OCI-LY7 (cell line): ENCODE measurements at regions of chr2 and their contacts with region 1.

Region 1: DNA sequence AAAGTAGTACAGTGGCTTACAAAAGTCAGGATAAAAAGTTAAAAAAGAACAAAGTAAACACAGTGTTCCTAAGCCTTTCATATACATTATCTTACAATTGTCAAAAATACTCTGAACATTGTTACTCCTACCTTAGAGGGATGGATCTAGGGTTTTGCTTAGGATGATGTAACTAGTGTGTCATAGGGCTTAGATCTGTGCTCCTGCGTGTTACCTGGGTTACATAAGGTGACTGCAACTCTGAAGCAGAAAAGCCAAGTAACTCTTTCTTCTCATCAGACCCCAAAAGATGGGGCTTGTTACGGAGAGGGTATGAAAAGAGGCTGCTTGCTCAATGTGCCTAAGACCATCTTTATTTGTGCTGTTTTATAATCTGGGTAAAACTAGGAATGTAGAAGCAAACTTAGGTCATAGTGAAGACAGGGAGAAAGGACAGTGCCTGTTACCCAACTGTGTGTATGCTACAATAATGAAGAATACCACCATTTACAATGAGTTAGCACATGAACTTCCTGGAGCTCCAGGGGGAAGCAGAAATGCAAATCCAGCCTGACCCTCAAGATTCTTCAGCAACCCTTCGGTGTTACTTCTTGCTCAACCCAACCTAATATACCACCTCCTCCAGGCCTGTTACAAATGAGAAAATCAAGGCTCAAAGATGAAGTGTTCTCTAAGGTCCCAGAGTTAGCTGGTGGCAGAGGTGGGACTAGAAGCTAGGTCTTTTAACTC is 42.0 kb upstream of the STK17B start:
- DNase-seq: peak; percentile 30
- H3K4me3 ChIP-seq: no peak overlapping the region
- H3K27ac ChIP-seq: no peak overlapping the region
- H3K4me1 ChIP-seq: peaks cover 50% of the 10 kb centered on the region
- CTCF ChIP-seq: no peak

Region 2: DNA sequence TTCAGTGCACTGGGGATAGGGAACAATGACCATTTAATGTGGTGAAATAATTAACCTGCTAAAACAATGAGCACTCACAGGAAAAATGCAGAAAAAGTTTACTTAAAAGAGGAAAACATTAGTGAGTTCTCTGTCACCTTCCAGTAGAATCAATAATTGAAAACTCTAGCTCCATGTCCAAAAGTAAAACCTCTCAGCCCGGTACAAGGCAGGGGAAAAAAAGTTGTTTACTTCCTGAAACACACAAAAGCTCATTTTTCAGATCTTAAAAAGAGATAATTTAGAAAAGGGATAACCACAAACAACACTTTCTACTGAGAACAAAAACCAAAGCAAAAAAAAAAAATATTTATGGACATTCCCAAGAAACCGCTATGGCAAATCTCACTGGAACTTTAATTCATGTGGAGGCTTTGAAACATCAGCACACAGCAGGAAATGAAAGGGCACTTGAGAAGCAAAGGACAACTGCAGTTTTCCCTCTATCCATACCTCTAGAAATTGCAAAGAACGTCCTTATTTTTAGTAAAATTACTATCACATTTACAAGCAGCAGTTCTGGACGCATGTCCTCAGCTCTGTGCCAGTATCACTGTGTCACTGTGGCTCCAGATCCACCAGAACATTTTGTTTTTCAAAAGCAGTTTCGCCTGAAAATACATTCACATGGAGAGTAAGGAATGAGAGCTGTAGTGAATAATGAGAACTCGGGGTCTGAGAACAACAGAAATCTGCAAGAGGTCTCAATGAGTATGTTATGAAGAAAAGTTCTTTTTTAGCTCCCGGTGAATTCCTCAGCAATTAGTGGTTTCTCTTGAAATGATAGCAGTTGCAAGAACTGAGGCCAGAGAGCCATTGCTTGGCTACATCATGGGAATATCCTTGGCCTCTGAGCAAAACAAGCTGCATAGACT is 100.1 kb before region 1 on chr2:
- CTCF ChIA-PET with region 1: no interaction called
- POLR2A ChIA-PET with region 1: no interaction called
- intact Hi-C with region 1: no loop called
- DNase-seq: no peak
- H3K4me3 ChIP-seq: no peak overlapping the region
- H3K27ac ChIP-seq: no peak overlapping the region
- H3K4me1 ChIP-seq: no peaks in the 10 kb centered on the region
- CTCF ChIP-seq: no peak

Region 3: GRCh38 chr2:196225213-196225612 is 11.8 kb after region 1 on chr2:
- CTCF ChIA-PET with region 1: no interaction called
- POLR2A ChIA-PET with region 1: interaction called, 27 read pairs
- intact Hi-C with region 1: no loop called
- DNase-seq: no peak
- H3K4me3 ChIP-seq: no peak overlapping the region
- H3K27ac ChIP-seq: no peak overlapping the region
- H3K4me1 ChIP-seq: peaks cover 23% of the 10 kb centered on the region
- CTCF ChIP-seq: no peak